Heart right ventricle (tissue), 16 donors: ENCODE measurements at regions of chr7 and their contacts with region 1.

Region 1: DNA sequence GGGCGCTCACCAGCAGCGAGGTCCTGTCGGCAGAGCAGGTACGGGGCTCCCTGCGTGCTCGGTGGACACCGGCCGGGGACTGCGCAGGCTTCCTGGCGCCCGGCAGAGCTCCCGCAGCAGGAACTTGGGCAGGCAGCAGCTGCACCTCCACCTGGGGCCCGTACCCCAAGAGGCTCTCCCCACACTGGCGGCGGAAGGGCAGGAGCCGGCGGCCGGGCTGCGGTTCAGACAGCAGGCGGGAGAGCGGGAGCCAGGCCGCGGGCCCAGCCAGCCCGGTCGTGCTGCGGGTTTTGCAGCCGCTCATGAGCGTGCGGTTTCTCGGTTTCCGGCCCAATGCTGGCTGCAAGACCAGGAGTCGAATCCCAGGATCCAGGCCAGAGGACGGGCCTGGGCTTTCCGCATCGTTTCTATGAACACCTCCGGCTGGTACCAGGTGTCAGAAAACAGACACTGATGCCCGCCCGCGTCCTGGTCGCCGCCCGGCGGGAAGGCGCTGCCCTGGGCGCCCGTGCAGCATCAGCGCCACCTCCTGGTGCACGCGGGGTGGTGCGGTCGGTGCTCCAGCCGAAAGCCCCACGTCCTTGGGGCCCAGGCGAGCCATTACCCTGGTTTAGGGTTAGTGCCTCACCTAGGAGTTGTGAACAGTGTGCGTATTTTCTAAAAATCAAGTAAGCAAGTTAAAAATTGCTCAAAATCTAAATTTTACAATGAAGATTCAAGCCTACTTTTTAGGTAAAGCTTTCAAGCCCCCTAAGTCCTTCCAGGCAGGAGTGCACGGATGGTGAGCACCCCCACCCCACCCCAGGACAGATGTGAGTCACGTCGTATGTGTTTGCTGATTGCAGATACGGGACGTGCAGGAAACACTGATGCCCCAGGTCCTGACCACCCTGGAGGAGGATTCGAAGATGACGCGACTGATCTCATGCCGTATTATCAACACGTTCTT is 47.4 kb upstream of the PRKAR1B start:
- DNase-seq: peak in 1 of 2 donors; percentile 66
- ATAC-seq: peak in 7 of 8 donors; percentile 15 to 55 (median 24)
- H3K4me3 ChIP-seq: no peak overlapping the region
- H3K27ac ChIP-seq: no peak overlapping the region
- H3K4me1 ChIP-seq: peaks cover 16 to 37% (median 21%) of the 10 kb centered on the region in 9 donors
- H3K27me3 ChIP-seq: no peaks in the 10 kb centered on the region
- CTCF ChIP-seq: peak; percentile 79 to 97 (median 93)

Region 2: GRCh38 chr7:142248-142941 is 632.0 kb before region 1 on chr7:
- intact Hi-C with region 1: no loop called
- DNase-seq: peak; percentile 69 to 79
- ATAC-seq: peak; percentile 89 to 97 (median 92)
- H3K4me3 ChIP-seq: no peak overlapping the region
- H3K27ac ChIP-seq: peak overlapping the region; percentile 22 to 65 (median 50)
- H3K4me1 ChIP-seq: peaks cover 0 to 18% (median 11%) of the 10 kb centered on the region in 9 donors
- H3K27me3 ChIP-seq: peaks cover 0 to 5% (median 0%) of the 10 kb centered on the region in 7 donors
- CTCF ChIP-seq: no peak

Region 3: DNA sequence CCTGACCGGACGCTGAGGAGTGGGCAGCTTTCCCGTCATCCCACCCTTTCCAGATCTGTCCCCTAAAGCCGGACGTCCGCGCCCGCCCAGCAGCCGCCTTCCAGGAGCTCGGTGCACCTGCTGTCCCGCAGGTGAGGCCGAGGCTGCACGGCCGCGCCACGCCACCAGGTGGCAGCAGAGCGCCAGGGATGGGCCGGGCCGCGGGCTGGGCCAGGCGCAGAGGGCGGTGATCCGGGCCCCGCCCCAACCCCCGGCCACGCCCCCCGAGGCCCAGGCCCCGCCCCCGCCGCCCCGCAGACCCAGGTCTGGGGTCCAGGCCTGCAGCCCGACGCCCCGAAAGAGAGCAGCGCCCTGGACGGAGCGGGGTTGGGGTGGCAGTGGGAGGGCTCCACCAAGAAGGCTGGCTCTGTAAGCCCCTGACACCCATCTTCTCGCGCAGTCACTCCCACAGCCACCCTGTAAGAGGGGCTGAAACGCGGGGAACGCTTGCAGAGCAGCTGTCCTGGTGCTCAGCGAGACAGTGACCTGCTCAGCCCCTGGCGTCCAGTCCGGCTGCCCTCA is 452.2 kb before region 1 on chr7:
- intact Hi-C with region 1: loop called in 9 of 10 experiments (anchors 1 to 5 kb)
- DNase-seq: peak; percentile 48 to 79
- ATAC-seq: peak; percentile 65 to 90 (median 80)
- H3K4me3 ChIP-seq: peak overlapping the region in 1 of 10 donors; percentile 20
- H3K27ac ChIP-seq: no peak overlapping the region
- H3K4me1 ChIP-seq: peaks cover 0 to 33% (median 5%) of the 10 kb centered on the region in 9 donors
- H3K27me3 ChIP-seq: peaks cover 0 to 25% (median 15%) of the 10 kb centered on the region in 7 donors
- CTCF ChIP-seq: peak; percentile 84 to 98 (median 95)

Region 4: DNA sequence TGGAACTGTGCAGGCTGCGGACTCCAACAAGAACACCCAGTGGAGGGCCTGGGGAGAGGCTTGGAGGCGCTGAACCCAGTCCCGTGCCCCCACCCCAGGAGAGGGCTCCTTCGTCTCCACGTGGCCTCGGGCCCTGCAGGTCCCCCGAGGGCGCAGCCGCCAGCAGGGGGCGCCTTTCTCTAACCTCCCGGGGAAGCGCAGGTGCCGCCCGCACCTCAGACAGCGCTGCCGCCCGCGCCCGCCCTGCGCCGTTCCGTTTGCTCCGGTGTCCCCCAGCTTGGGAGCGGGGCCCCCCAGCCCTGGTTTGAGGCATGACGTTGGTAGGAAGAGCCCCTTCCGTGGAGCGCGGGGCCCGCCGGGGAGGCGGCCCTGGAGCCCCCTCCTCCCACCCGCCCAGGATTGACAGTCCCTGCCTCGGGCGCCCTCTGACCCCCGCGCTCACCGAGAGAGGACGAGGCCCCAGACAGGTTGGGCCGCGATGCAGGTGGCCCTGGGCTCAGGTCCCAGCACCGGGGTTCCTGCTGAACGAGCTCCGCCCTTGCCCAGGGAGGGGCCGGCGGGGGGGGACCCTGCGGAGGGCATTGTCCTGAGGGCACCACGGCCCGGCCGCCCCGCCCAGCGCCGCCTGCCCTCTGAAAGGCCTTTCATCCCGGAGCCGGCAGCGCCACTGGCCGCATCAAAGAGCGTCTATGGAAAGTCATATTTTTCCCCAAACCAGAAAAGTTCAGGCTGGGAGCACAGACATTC is 441.6 kb before region 1 on chr7:
- intact Hi-C with region 1: loop called in 5 of 10 experiments (anchors 2 to 5 kb)
- DNase-seq: peak; percentile 75 to 86
- ATAC-seq: peak; percentile 86 to 94 (median 90)
- H3K4me3 ChIP-seq: peak overlapping the region in 9 of 10 donors; percentile 37 to 56 (median 50)
- H3K27ac ChIP-seq: peak overlapping the region; percentile 24 to 85 (median 76)
- H3K4me1 ChIP-seq: peaks cover 4 to 17% (median 12%) of the 10 kb centered on the region in 9 donors
- H3K27me3 ChIP-seq: peaks cover 0 to 15% (median 4%) of the 10 kb centered on the region in 7 donors
- CTCF ChIP-seq: peak; percentile 78 to 95 (median 91)

Region 5: GRCh38 chr7:636396-636795 is 138.0 kb before region 1 on chr7:
- intact Hi-C with region 1: loop called in 1 of 10 experiments (anchors 10 kb)
- DNase-seq: peak in 1 of 2 donors; percentile 26
- ATAC-seq: peak in 5 of 8 donors; percentile 53 to 70 (median 59)
- H3K4me3 ChIP-seq: no peak overlapping the region
- H3K27ac ChIP-seq: no peak overlapping the region
- H3K4me1 ChIP-seq: no peaks in the 10 kb centered on the region
- H3K27me3 ChIP-seq: no peaks in the 10 kb centered on the region
- CTCF ChIP-seq: peak in 8 of 9 donors; percentile 20 to 60 (median 51)

Region 6: DNA sequence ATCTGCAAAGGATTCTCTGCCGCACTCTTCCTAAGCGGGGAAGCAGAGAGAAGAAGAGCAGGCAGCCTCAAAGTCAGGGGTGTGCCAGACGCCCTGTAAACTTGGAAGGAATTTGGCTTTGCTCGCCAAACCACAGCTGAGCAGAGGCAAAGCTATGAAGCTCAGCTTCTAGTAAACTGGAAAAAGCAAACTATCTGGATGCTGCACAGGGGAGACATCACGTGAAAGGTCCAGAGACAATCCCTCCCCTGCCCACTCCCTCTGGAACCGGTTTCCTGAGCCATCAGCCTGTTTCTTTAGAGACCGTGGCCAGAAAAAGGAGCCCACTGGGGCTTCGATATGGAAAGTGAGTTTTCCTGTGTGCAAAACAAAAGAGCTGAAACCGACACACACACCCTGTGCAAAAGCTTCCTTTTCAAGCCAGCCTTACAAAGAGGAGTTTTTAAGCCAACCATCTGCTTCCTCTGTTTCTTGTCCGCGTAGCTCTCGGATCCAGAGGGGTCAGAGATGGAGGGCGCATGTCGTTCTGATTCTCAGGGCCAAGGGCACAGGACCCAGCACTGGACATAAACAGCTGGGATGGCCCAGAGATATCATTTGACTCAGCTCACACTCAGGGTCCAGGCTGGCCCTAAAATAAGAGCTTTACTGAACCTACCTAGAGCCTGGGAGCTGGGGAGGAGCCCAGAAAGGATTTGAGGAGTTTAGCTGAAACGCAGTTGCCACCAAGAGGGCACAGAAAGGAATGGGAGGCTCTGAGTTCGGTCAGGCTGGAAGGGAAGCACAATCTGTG is 106.1 kb before region 1 on chr7:
- intact Hi-C with region 1: loop called in 1 of 10 experiments (anchors 5 kb)
- DNase-seq: peak in 1 of 2 donors; percentile 48
- ATAC-seq: peak in 7 of 8 donors; percentile 16 to 57 (median 37)
- H3K4me3 ChIP-seq: peak overlapping the region in 4 of 10 donors; percentile 5 to 15 (median 9)
- H3K27ac ChIP-seq: peak overlapping the region in 9 of 10 donors; percentile 45 to 84 (median 66)
- H3K4me1 ChIP-seq: peaks cover 20 to 51% (median 45%) of the 10 kb centered on the region in 9 donors
- H3K27me3 ChIP-seq: no peaks in the 10 kb centered on the region
- CTCF ChIP-seq: peak in 1 of 9 donors; percentile 6

Region 7: GRCh38 chr7:1086588-1087464 is 312.4 kb after region 1 on chr7:
- intact Hi-C with region 1: no loop called
- DNase-seq: peak; percentile 79 to 81
- ATAC-seq: peak; percentile 60 to 90 (median 73)
- H3K4me3 ChIP-seq: peak overlapping the region in 9 of 10 donors; percentile 32 to 63 (median 51)
- H3K27ac ChIP-seq: peak overlapping the region in 6 of 10 donors; percentile 3 to 71 (median 52)
- H3K4me1 ChIP-seq: peaks cover 12 to 50% (median 28%) of the 10 kb centered on the region in 9 donors
- H3K27me3 ChIP-seq: no peaks in the 10 kb centered on the region
- CTCF ChIP-seq: peak; percentile 91 to 96 (median 94)